CD8-positive, alpha-beta T cell (primary cell): ENCODE measurements at regions of chr11 and their contacts with region 1.

Region 1: DNA sequence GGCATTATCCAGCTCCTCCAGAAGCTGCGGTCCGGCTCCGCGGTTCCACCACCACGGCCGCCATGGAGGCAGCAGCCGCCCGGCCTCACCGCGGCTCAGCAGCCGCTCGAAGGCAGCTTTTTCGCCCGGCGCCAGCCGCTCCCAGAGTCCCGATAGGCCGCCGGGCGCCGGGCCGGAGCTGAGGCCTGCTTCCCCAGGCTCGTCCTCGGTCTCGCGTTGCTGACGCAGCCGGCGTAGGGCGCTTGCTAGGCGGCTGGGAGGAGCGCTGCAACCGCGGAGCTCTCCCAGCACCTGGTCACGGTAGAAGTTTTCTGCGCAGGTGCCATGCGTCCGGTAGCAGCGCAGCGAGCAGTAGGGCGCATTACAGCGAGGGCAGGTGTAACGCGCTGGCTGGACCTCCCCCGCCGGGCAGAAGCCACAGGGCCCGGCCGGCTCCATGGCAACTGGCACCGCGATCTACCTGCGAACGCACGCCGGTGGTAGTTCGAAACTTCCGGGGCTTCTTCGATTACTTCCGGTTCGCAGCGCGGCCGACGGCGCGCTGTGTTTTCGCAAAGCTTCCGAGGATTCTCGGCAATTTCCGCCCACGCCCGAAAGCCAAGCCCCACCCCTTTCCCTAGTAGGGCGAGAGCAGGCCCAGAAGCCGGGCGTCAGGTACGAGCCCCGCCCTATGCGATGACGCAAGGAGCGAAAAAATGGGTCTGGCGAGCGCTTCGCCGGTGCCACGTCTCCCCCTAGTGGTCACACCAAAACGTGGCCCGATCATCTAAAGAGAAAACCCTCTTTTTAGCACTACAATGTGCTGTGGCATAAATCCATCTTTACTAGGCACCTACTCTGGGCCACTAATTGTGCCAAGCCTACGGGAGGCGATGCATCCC is at the start of gene ZNHIT2:
- DNase-seq: peak; percentile 99 to 100 (median 100)
- ATAC-seq: peak; percentile 70
- H3K4me3 ChIP-seq: peak within 1 kb of the TSS; percentile 88
- H3K4me3 Mint-ChIP-seq: peak within 1 kb of the TSS; percentile 88
- H3K27ac ChIP-seq: peak within 1 kb of the TSS; percentile 88 to 95
- H3K27ac Mint-ChIP-seq: peak within 1 kb of the TSS; percentile 96
- H3K4me1 ChIP-seq: peaks cover 49% of the 10 kb centered on the region
- H3K4me1 Mint-ChIP-seq: peaks cover 56% of the 10 kb centered on the region
- H3K27me3 ChIP-seq: no peaks in the 10 kb centered on the region
- H3K27me3 Mint-ChIP-seq: no peaks in the 10 kb centered on the region
- CTCF ChIP-seq: peak; percentile 79
- total RNA-seq, gene ZNHIT2: 8.9 to 9.3 TPM

Region 2: GRCh38 chr11:64619811-64620380 is 497.6 kb before region 1 on chr11:
- CTCF ChIA-PET with region 1: no interaction called
- POLR2A ChIA-PET with region 1: no interaction called
- intact Hi-C with region 1: no loop called
- DNase-seq: no peak
- ATAC-seq: no peak
- H3K4me3 ChIP-seq: no peak overlapping the region
- H3K4me3 Mint-ChIP-seq: no peak overlapping the region
- H3K27ac ChIP-seq: no peak overlapping the region
- H3K27ac Mint-ChIP-seq: no peak overlapping the region
- H3K4me1 ChIP-seq: peaks cover 10% of the 10 kb centered on the region
- H3K4me1 Mint-ChIP-seq: peaks cover 6% of the 10 kb centered on the region
- H3K27me3 ChIP-seq: no peaks in the 10 kb centered on the region
- H3K27me3 Mint-ChIP-seq: no peaks in the 10 kb centered on the region
- CTCF ChIP-seq: no peak

Region 3: GRCh38 chr11:64688534-64688982 is 428.9 kb before region 1 on chr11:
- CTCF ChIA-PET with region 1: no interaction called
- POLR2A ChIA-PET with region 1: no interaction called
- intact Hi-C with region 1: loop called in 1 of 2 experiments (anchors 5 kb)
- DNase-seq: peak; percentile 80 to 97 (median 93)
- ATAC-seq: peak; percentile 99
- H3K4me3 ChIP-seq: peak overlapping the region; percentile 21 to 44
- H3K4me3 Mint-ChIP-seq: peak overlapping the region; percentile 64
- H3K27ac ChIP-seq: peak overlapping the region in 1 of 2 experiments; percentile 23
- H3K27ac Mint-ChIP-seq: peak overlapping the region; percentile 63
- H3K4me1 ChIP-seq: peaks cover 18% of the 10 kb centered on the region
- H3K4me1 Mint-ChIP-seq: peaks cover 21% of the 10 kb centered on the region
- H3K27me3 ChIP-seq: no peaks in the 10 kb centered on the region
- H3K27me3 Mint-ChIP-seq: peaks cover 8% of the 10 kb centered on the region
- CTCF ChIP-seq: peak; percentile 94

Region 4: GRCh38 chr11:64916775-64917662 is 200.4 kb before region 1 on chr11 and contains the start of gene ATG2A:
- CTCF ChIA-PET with region 1: no interaction called
- POLR2A ChIA-PET with region 1: no interaction called
- intact Hi-C with region 1: loop called in 1 of 2 experiments (anchors 2 kb)
- DNase-seq: peak; percentile 98 to 100 (median 99)
- ATAC-seq: peak; percentile 96
- H3K4me3 ChIP-seq: peak within 1 kb of the TSS; percentile 76 to 79
- H3K4me3 Mint-ChIP-seq: peak within 1 kb of the TSS; percentile 94
- H3K27ac ChIP-seq: peak within 1 kb of the TSS; percentile 77 to 93
- H3K27ac Mint-ChIP-seq: peak within 1 kb of the TSS; percentile 94
- H3K4me1 ChIP-seq: peaks cover 26% of the 10 kb centered on the region
- H3K4me1 Mint-ChIP-seq: peaks cover 22% of the 10 kb centered on the region
- H3K27me3 ChIP-seq: no peaks in the 10 kb centered on the region
- H3K27me3 Mint-ChIP-seq: no peaks in the 10 kb centered on the region
- CTCF ChIP-seq: no peak
- total RNA-seq, gene ATG2A: 285 to 311 TPM

Region 5: DNA sequence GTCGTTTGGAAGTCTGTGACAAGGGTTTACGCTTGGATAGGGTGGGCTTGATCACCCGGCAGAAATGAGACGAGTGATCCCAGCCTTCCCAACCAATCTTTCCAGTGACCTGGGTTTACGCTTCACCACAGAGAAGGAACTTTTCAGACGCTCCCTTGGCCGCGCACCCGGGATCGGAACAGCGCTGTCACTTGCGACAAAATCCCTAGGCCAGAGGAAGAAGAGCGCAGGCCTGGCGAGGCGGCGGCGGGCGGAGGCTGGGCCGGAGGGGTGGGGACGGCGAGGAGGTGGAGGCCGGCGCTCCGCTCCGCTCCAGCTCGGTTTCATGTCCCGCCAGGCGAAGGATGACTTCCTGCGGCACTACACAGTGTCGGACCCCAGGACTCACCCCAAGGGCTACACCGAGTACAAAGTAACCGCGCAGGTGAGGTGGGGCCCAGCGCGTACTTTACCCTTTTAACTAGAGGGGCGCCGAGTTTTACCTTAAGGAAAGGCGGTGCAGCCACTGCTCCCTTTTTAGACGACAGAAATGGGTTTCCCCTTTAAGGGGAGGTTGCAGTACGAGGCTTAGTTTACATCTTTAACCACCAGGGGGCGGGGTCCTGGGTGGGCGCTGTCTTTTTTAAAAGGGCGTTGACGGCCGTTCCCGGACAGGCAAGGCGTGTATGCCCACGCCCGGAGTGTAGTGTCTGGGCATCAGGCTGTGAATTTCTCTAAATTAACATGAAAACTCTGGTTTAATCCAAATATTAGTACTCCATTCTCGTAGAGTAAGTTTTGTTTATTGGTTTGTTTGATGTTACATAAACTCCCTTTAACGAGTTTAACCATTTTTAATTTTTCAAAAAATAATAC is 90.0 kb before region 1 on chr11 and contains the start of gene SNX15:
- CTCF ChIA-PET with region 1: interaction called, 4 read pairs
- POLR2A ChIA-PET with region 1: interaction called, 4 read pairs
- intact Hi-C with region 1: loop called in 1 of 2 experiments (anchors 1 kb)
- DNase-seq: peak; percentile 77 to 96 (median 90)
- ATAC-seq: peak; percentile 96
- H3K4me3 ChIP-seq: peak within 1 kb of the TSS; percentile 34 to 54
- H3K4me3 Mint-ChIP-seq: peak within 1 kb of the TSS; percentile 69
- H3K27ac ChIP-seq: peak within 1 kb of the TSS; percentile 41 to 71
- H3K27ac Mint-ChIP-seq: peak within 1 kb of the TSS; percentile 80
- H3K4me1 ChIP-seq: peaks cover 19% of the 10 kb centered on the region
- H3K4me1 Mint-ChIP-seq: peaks cover 18% of the 10 kb centered on the region
- H3K27me3 ChIP-seq: no peaks in the 10 kb centered on the region
- H3K27me3 Mint-ChIP-seq: no peaks in the 10 kb centered on the region
- CTCF ChIP-seq: peak; percentile 80
- total RNA-seq, gene SNX15: 10.4 to 14.0 TPM

Region 6: GRCh38 chr11:65083834-65084597 is 33.4 kb before region 1 on chr11 and contains the starts of genes CDCA5 and ZFPL1:
- CTCF ChIA-PET with region 1: interaction called, 12 read pairs
- POLR2A ChIA-PET with region 1: interaction called, 12 read pairs
- intact Hi-C with region 1: loop called (anchors 1 kb)
- DNase-seq: peak; percentile 94 to 98 (median 96)
- ATAC-seq: peak; percentile 88
- H3K4me3 ChIP-seq: peak within 1 kb of the TSS; percentile 71 to 87
- H3K4me3 Mint-ChIP-seq: peak within 1 kb of the TSS; percentile 93
- H3K27ac ChIP-seq: peak within 1 kb of the TSS; percentile 90 to 97
- H3K27ac Mint-ChIP-seq: peak within 1 kb of the TSS; percentile 99
- H3K4me1 ChIP-seq: peaks cover 17% of the 10 kb centered on the region
- H3K4me1 Mint-ChIP-seq: peaks cover 27% of the 10 kb centered on the region
- H3K27me3 ChIP-seq: no peaks in the 10 kb centered on the region
- H3K27me3 Mint-ChIP-seq: no peaks in the 10 kb centered on the region
- CTCF ChIP-seq: no peak
- total RNA-seq, gene CDCA5: 0.76 to 1.2 TPM
- total RNA-seq, gene ZFPL1: 52.3 to 52.6 TPM

Region 7: DNA sequence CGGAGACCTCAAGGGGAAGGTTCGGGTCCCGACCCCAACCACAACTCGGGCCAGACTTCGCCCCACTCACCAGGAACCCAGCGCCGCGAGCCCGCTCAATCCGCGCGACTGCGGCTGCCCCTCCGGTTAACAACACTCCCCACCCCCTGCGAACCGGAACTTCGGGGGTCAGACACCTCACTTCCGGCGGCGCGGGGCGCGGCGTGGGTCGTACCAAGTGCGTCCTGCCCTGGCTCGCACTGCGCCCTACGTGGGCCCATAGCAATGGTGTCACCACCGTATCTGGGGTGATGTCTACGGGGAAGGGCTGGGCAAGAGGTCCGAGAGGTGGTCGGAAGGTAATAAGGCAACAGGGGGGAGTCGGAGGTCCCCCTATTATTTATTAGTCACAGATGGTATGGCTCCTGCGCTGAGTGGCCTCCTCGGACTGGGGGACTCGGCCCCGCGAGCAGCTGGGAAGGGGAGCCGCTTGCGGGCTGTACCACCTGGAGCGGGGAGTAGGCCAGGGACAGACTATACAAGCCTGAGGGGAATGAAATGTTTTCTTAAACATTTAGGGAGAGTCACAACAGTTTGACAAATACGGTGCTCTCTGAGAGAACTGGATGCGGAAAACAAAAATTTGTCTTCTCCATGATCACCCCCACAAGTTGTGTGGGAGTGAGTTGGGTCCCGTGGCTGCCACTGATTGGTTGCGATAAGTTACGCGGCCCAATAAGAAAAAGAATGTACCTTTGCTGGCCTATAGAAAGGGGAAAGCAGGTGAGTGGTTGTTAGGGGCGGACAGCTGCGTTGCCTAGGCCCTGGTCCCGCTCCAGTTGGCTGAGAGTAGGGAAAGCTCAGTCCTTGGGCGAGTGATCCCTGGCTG is 17.2 kb after region 1 on chr11 and contains the start of gene SYVN1:
- CTCF ChIA-PET with region 1: interaction called, 8 read pairs
- POLR2A ChIA-PET with region 1: interaction called, 66 read pairs
- intact Hi-C with region 1: loop called (anchors 1 kb)
- DNase-seq: peak; percentile 79 to 97 (median 91)
- ATAC-seq: peak; percentile 88
- H3K4me3 ChIP-seq: peak within 1 kb of the TSS; percentile 83 to 85
- H3K4me3 Mint-ChIP-seq: peak within 1 kb of the TSS; percentile 99
- H3K27ac ChIP-seq: peak within 1 kb of the TSS; percentile 96 to 98
- H3K27ac Mint-ChIP-seq: peak within 1 kb of the TSS; percentile 100
- H3K4me1 ChIP-seq: peaks cover 33% of the 10 kb centered on the region
- H3K4me1 Mint-ChIP-seq: peaks cover 39% of the 10 kb centered on the region
- H3K27me3 ChIP-seq: no peaks in the 10 kb centered on the region
- H3K27me3 Mint-ChIP-seq: no peaks in the 10 kb centered on the region
- CTCF ChIP-seq: no peak
- total RNA-seq, gene SYVN1: 93.0 to 95.5 TPM